BJ (cell line): ENCODE measurements at regions of chr16 and their contacts with region 1.

Region 1: DNA sequence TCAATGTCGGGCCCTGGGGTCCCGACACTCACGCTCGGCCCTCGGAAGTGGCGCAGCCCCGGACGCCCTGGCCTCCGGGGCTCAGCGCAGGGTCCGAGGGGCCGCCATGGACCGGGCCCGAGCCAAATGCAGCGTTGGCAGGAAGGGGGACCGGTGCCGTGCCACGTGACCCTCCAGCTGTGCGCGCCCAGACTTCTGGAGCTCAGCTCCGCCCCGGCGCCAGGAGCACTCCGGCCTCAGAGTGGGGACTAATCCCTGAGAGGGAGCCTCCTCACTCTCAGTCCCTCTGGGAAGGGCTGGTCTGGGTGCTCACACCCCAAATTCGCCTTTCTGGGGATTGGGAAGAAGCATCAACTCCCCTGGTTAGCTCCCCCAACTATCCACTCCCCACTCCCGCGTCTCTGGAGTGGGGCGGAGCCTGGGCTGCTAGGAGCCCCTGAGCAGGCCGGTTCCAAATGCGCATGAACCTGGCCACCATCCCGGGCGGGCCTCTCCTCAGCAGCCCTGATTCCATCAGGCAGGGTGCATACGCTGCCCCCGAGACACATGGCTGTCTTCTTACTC is at the start of gene B3GNT9:
- DNase-seq: no peak
- H3K4me3 ChIP-seq: peak within 1 kb of the TSS; percentile 83
- H3K27me3 ChIP-seq: no peaks in the 10 kb centered on the region
- CTCF ChIP-seq: no peak
- polyA plus RNA-seq, gene B3GNT9: 25.7 and 34.9 TPM in 2 replicates

Region 2: GRCh38 chr16:67104061-67104460 is 46.9 kb before region 1 on chr16:
- CTCF ChIA-PET with region 1: interaction called, 18 read pairs
- POLR2A ChIA-PET with region 1: no interaction called
- DNase-seq: no peak
- H3K4me3 ChIP-seq: no peak overlapping the region
- H3K27me3 ChIP-seq: no peaks in the 10 kb centered on the region
- CTCF ChIP-seq: peak; percentile 45

Region 3: DNA sequence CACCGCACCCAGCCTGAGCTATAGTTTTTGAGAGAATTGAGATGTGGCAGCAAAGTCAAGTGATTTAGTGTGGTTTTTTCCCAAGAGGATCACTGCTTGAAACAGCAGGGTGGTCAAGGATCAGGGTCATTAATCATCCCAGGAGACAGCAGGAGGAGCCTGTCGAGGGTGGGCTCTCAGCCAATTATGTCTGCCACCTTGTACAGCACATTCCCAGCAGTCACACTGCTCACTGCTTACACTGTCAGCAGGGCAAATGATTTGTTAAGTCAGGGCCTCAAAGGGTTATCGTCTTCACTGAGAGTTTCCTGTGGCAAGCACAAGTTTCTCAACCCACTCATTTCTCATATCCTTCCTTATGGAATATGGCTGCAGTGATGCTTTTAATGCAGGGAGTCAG is 13.3 kb before region 1 on chr16:
- CTCF ChIA-PET with region 1: interaction called, 21 read pairs
- POLR2A ChIA-PET with region 1: no interaction called
- DNase-seq: no peak
- H3K4me3 ChIP-seq: no peak overlapping the region
- H3K27me3 ChIP-seq: no peaks in the 10 kb centered on the region
- CTCF ChIP-seq: no peak